ENCODE measurements at regions of chr15 and their contacts with region 1.

Region 1: GRCh38 chr15:43285609-43286037 is 18.9 kb upstream of the TGM5 start:
- DNase-seq: peak; percentile 51 to 64 (median 62)
- H3K4me3 ChIP-seq: no peak overlapping the region
- H3K4me3 Mint-ChIP-seq: no peak overlapping the region
- H3K27ac ChIP-seq: no peak overlapping the region
- H3K27ac Mint-ChIP-seq: no peak overlapping the region
- H3K4me1 ChIP-seq: no peaks in the 10 kb centered on the region
- H3K4me1 Mint-ChIP-seq: peaks cover 0 to 6% (median 4%) of the 10 kb centered on the region in 4 donors
- H3K27me3 ChIP-seq: no peaks in the 10 kb centered on the region
- H3K27me3 Mint-ChIP-seq: peaks cover 4 to 14% of the 10 kb centered on the region in 2 donors

Region 2: DNA sequence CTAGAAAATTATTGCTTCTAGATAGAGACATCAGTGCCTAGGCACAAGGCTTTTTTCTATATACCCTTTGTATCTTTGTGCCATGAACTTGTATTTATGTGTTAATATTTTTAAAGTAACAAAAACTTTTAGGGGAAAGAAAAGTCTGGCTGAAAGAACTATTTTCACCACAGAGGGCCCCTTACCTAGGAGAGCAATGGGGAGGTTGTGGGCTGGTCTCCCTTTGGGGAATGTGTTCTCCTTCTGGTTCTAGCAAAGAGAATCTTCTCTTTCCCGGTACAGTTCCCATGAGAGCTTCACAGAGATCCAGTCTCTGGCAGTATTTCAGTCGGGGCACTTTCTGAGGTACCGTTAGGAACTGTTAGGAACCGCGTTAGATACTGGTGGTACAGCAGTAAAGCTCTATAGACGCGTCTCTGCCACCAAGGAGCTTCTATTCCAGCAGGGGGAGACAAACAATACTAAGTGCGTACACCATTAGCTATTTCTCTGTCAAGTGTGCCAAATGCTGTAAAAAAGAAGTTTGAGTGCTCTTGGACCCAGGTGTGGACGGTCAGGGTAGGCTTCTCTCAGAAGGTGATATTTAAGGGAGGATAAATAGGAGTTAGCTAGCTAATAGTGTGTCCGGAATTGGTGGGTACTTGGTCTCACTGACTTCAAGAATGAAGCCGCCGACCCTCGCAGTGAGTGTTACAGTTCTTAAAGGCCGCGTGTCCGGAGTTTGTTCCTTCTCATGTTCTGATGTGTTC is 60.2 kb before region 1 on chr15:
- CTCF ChIA-PET with region 1: interaction called, 82 read pairs
- POLR2A ChIA-PET with region 1: interaction called, 12 read pairs
- intact Hi-C with region 1: no loop called
- DNase-seq: peak; percentile 45 to 61 (median 52)
- H3K4me3 ChIP-seq: no peak overlapping the region
- H3K4me3 Mint-ChIP-seq: no peak overlapping the region
- H3K27ac ChIP-seq: no peak overlapping the region
- H3K27ac Mint-ChIP-seq: peak overlapping the region in 1 of 7 donors; percentile 43
- H3K4me1 ChIP-seq: no peaks in the 10 kb centered on the region
- H3K4me1 Mint-ChIP-seq: peaks cover 0 to 8% (median 4%) of the 10 kb centered on the region in 4 donors
- H3K27me3 ChIP-seq: no peaks in the 10 kb centered on the region
- H3K27me3 Mint-ChIP-seq: peaks cover 4 to 10% of the 10 kb centered on the region in 2 donors

Region 3: DNA sequence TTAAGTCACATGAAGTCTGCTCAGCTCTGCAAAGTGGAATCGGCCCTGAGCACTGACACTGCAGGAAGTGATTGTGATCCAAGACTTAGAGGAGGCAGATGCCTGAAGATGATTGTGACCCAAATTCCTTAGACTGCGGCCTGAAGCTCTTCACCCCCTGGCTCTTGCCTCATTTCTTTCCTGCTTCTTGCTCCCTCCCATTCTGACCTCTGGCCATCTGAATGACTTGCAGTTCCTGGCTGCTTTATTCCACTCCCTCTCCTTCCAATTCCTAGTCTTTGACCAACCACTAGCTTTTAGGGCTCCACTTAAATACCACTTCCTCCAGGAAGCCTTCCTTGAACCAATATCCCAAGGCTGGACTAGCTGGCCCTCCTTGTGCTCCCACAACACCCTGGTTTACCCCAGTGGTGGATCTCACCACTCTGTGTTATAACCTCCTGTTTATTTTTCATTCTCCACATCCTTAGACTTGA is 54.9 kb before region 1 on chr15:
- CTCF ChIA-PET with region 1: interaction called, 82 read pairs
- POLR2A ChIA-PET with region 1: interaction called, 12 read pairs
- intact Hi-C with region 1: no loop called
- DNase-seq: no peak
- H3K4me3 ChIP-seq: no peak overlapping the region
- H3K4me3 Mint-ChIP-seq: no peak overlapping the region
- H3K27ac ChIP-seq: no peak overlapping the region
- H3K27ac Mint-ChIP-seq: peak overlapping the region in 1 of 7 donors; percentile 9
- H3K4me1 ChIP-seq: no peaks in the 10 kb centered on the region
- H3K4me1 Mint-ChIP-seq: peaks cover 0 to 4% (median 0%) of the 10 kb centered on the region in 4 donors
- H3K27me3 ChIP-seq: no peaks in the 10 kb centered on the region
- H3K27me3 Mint-ChIP-seq: peaks cover 1 to 7% of the 10 kb centered on the region in 2 donors

Region 4: DNA sequence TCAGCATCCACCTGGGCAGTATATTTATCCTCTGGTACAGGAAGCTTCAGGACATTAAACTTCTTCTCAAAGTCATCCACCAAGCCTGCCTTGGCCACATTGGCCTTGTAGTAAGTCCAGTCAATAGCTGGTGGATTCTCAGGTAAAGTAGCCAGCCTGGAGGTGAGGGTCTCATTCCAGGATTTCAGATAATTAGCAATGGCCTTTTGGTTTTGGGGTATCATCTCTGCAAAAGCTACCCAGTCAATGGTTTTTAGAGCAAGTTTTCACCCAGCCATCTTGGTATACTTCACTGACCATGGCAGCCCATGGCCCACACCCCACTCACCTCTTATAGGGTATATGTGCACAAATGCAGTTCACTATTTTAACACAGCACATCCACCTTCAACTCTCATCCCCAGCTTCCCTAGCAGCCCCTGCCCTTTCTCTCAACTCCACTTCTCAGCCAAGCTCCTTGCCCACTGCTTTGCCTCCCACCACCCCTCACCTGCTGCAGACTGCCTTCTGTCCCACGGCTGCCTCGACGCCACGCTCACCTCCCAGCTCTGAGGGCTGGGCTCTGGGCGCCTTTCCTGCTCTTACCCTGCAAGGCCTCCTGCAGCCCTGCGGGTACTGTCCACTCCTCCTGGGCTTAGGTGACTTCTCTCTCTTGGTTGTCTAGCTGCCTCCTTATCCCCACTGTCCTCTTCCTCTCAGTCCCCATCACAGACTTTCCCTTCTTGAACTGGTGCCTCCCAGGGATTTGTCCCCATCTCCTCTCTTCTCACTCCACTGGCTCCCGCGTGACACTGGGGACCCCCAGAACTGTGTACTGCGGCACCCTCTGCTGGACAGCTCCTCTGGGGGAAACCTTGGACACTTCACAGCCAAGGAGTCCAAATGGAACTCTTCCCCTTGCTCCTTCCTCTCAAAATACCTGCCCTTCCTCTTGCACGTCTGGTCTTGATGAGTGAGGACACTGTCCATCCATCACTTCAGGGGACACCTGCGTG is 17.2 kb before region 1 on chr15:
- CTCF ChIA-PET with region 1: interaction called, 17 read pairs
- POLR2A ChIA-PET with region 1: no interaction called
- intact Hi-C with region 1: no loop called
- DNase-seq: no peak
- H3K4me3 ChIP-seq: no peak overlapping the region
- H3K4me3 Mint-ChIP-seq: no peak overlapping the region
- H3K27ac ChIP-seq: no peak overlapping the region
- H3K27ac Mint-ChIP-seq: peak overlapping the region in 1 of 7 donors; percentile 6
- H3K4me1 ChIP-seq: peaks cover 7% of the 10 kb centered on the region
- H3K4me1 Mint-ChIP-seq: peaks cover 3 to 16% (median 7%) of the 10 kb centered on the region in 4 donors
- H3K27me3 ChIP-seq: no peaks in the 10 kb centered on the region
- H3K27me3 Mint-ChIP-seq: peaks cover 12 to 20% of the 10 kb centered on the region in 2 donors

Measured in CD4-positive, alpha-beta memory T cell (primary cell).